ENCODE measurements at regions of chr2 and their contacts with region 1.

Region 1: GRCh38 chr2:39513641-39514094 is 76.6 kb upstream of the MAP4K3 start:
- H3K4me3 Mint-ChIP-seq: no peak overlapping the region
- H3K27ac Mint-ChIP-seq: peak overlapping the region; percentile 10
- H3K4me1 Mint-ChIP-seq: peaks cover 44% of the 10 kb centered on the region
- H3K27me3 Mint-ChIP-seq: peaks cover 56% of the 10 kb centered on the region

Region 2: DNA sequence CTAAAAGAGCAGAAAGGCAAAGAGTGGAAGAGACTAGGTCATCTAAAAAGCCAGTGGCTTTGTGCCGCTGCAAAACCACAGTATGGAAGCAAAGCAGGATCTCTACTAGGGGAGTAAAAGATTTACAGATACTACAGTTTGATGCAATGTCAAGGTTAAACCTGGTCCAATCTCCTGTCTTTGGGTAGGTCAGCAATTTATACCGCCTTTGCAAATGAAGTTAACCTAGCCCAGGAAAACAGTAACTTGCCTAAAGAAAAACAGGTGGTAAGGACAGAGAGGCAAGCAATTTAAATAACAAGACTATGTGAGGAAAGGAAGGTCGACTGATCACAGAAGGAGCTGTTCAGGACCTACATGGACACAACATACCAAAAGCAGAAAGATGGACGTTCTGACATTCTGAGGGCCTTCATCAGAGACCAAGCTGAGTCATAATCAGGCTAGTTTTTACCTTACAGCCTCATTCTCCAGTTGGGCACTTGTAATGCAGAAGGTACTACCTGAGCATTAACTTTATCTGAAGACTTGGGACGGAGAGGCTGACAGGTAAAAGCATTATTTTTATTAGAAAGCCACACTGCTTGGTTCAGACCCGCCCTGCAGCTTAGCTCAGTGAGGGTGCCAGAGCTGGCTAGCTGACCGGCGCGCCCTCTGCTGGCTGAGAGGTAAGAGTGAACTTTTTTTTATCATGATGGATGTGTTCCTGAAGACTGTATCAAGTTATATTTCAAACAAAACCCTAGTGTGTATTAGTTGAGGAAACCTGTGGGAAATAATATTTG is 285.8 kb before region 1 on chr2:
- intact Hi-C with region 1: no loop called
- H3K4me3 Mint-ChIP-seq: peak overlapping the region; percentile 17
- H3K27ac Mint-ChIP-seq: no peak overlapping the region
- H3K4me1 Mint-ChIP-seq: peaks cover 5% of the 10 kb centered on the region
- H3K27me3 Mint-ChIP-seq: peaks cover 1% of the 10 kb centered on the region

Region 3: GRCh38 chr2:39379643-39380524 is 133.8 kb before region 1 on chr2:
- intact Hi-C with region 1: loop called (anchors 5 kb)
- H3K4me3 Mint-ChIP-seq: no peak overlapping the region
- H3K27ac Mint-ChIP-seq: no peak overlapping the region
- H3K4me1 Mint-ChIP-seq: peaks cover 15% of the 10 kb centered on the region
- H3K27me3 Mint-ChIP-seq: no peaks in the 10 kb centered on the region

Region 4: GRCh38 chr2:39492095-39492590 is 21.5 kb before region 1 on chr2:
- intact Hi-C with region 1: loop called (anchors 2 kb)
- H3K4me3 Mint-ChIP-seq: peak overlapping the region; percentile 54
- H3K27ac Mint-ChIP-seq: peak overlapping the region; percentile 73
- H3K4me1 Mint-ChIP-seq: peaks cover 42% of the 10 kb centered on the region
- H3K27me3 Mint-ChIP-seq: peaks cover 49% of the 10 kb centered on the region

Region 5: DNA sequence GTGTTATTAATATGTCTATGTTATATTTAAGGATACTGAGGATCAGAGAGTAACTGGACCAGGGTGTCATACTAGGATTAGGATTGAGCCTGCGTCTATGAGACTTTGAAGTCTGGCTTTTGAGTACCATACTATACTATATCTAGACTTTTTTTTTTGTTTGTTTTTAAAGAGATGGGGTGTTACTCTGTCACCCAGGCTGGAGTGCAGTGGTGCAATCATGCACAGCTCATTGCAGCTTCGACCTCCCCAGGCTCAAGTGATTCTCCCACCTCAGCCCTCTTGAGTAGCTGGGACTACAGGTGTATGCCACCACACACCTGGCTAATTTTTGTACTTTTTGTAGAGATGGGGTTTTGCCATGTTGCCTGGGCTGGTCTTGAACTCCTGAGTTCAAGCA is 10.4 kb before region 1 on chr2:
- intact Hi-C with region 1: no loop called
- H3K4me3 Mint-ChIP-seq: no peak overlapping the region
- H3K27ac Mint-ChIP-seq: no peak overlapping the region
- H3K4me1 Mint-ChIP-seq: peaks cover 7% of the 10 kb centered on the region
- H3K27me3 Mint-ChIP-seq: peaks cover 57% of the 10 kb centered on the region